B cell (primary cell): ENCODE measurements at regions of chr9 and their contacts with region 1.

Region 1: DNA sequence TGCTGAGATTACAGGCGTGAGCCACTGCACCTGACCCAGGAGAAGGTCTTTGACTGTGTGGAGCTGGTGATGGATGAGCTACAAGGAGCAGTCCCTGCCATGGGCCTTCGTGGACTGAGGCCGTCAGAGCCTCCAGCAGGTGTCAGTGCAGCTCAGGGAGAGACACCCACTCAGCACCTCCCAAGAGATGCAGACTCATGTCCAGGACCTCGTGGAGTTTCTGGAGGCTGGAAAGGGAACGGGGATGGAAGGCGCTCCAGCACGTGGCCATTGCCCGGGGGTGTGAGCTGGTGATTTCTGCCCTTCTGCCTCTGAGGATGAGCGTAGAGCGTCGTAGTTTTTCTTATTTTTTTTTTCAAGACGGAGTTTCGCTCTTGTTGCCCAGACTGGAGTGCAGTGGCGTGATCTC is 9.5 kb downstream of the TOR4A start:
- DNase-seq: peak; percentile 60
- ATAC-seq: peak; percentile 35
- H3K4me3 ChIP-seq: no peak overlapping the region
- H3K4me3 Mint-ChIP-seq: peak overlapping the region; percentile 32
- H3K27ac ChIP-seq: peak overlapping the region; percentile 38 to 81
- H3K27ac Mint-ChIP-seq: peak overlapping the region; percentile 83
- H3K4me1 ChIP-seq: peaks cover 19 to 32% of the 10 kb centered on the region in 2 donors
- H3K4me1 Mint-ChIP-seq: peaks cover 24% of the 10 kb centered on the region
- H3K27me3 ChIP-seq: no peaks in the 10 kb centered on the region
- H3K27me3 Mint-ChIP-seq: no peaks in the 10 kb centered on the region
- CTCF ChIP-seq: peak; percentile 18

Region 2: GRCh38 chr9:137396227-137396626 is 109.2 kb after region 1 on chr9:
- CTCF ChIA-PET with region 1: no interaction called
- POLR2A ChIA-PET with region 1: no interaction called
- intact Hi-C with region 1: no loop called
- DNase-seq: no peak
- ATAC-seq: no peak
- H3K4me3 ChIP-seq: no peak overlapping the region
- H3K4me3 Mint-ChIP-seq: no peak overlapping the region
- H3K27ac ChIP-seq: no peak overlapping the region
- H3K27ac Mint-ChIP-seq: no peak overlapping the region
- H3K4me1 ChIP-seq: peaks cover 9 to 17% of the 10 kb centered on the region in 2 donors
- H3K4me1 Mint-ChIP-seq: peaks cover 17% of the 10 kb centered on the region
- H3K27me3 ChIP-seq: no peaks in the 10 kb centered on the region
- H3K27me3 Mint-ChIP-seq: no peaks in the 10 kb centered on the region
- CTCF ChIP-seq: no peak

Region 3: DNA sequence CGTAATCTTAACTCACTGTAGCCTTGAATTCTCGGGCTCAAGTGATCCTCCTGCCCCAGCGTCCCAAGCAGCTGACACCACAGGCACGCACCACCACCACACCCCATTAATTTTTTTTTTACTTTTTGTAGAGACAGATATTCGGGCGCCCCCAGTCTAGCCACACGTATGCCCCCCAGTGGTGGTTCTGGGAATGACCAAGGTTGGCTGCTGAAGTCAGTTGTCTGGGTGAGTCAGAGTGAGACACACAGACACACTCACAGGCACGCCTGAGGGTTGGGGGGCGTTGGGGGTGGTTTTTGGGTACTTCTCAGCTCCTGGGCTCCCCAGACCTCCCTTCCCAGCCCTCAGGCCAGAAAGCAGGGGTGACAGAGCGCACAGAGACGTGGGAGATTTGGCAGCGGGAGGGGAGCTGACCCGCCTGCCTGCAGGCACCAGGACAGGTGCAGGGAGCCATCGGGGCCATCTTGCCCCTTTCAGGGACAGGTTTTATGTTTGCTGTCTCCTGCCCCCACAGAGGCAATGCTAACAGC is 158.4 kb after region 1 on chr9:
- CTCF ChIA-PET with region 1: interaction called, 11 read pairs
- POLR2A ChIA-PET with region 1: interaction called, 4 read pairs
- intact Hi-C with region 1: loop called (anchors 2 kb)
- DNase-seq: peak; percentile 88
- ATAC-seq: peak; percentile 89
- H3K4me3 ChIP-seq: no peak overlapping the region
- H3K4me3 Mint-ChIP-seq: no peak overlapping the region
- H3K27ac ChIP-seq: no peak overlapping the region
- H3K27ac Mint-ChIP-seq: no peak overlapping the region
- H3K4me1 ChIP-seq: peaks cover 7 to 23% of the 10 kb centered on the region in 2 donors
- H3K4me1 Mint-ChIP-seq: peaks cover 8% of the 10 kb centered on the region
- H3K27me3 ChIP-seq: peaks cover 0 to 20% (median 7%) of the 10 kb centered on the region in 4 experiments
- H3K27me3 Mint-ChIP-seq: peaks cover 11% of the 10 kb centered on the region
- CTCF ChIP-seq: peak; percentile 83